ENCODE measurements at regions of chr17 and their contacts with region 1.

Region 1: GRCh38 chr17:34199932-34200534 is 55.1 kb upstream of the CCL2 start:
- DNase-seq: peak; percentile 54
- ATAC-seq: peak; percentile 93

Region 2: DNA sequence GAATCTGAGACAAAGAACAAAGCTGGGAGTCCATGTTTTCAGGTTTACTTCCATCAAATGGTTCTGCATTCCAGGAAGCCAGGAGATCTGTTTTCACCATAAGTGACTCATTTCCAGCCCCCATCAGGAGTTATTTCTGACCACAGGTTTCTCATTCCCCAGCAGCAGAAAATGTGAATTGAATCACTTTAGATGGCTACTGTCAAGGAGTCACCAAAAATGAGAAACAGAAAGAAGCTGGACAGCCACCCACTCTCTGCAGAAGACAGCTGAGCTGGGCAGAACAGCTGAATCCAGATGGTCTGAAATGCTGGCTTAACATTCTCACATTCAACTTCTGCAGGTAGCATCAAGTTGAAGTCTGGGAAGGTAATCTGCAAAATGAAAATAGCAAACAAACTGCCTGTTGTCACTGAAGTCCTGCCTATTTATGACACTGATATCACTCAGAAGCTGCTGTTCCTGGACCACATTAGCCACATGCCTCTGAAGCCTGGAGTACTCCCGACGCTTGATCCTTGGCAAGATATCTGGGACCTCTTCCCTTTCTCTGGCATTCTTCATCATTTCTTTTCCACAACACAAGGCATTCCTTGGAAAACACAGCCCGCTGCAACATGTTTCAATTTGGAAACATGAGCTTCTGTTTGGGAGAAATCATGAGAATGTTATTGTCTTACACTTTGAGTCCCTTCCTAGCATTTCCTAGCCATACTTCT is 100.8 kb after region 1 on chr17:
- intact Hi-C with region 1: loop called (anchors 2 kb)
- DNase-seq: no peak
- ATAC-seq: peak; percentile 45

Region 3: GRCh38 chr17:34311291-34311690 is 111.3 kb after region 1 on chr17:
- intact Hi-C with region 1: no loop called
- DNase-seq: no peak
- ATAC-seq: no peak

Region 4: DNA sequence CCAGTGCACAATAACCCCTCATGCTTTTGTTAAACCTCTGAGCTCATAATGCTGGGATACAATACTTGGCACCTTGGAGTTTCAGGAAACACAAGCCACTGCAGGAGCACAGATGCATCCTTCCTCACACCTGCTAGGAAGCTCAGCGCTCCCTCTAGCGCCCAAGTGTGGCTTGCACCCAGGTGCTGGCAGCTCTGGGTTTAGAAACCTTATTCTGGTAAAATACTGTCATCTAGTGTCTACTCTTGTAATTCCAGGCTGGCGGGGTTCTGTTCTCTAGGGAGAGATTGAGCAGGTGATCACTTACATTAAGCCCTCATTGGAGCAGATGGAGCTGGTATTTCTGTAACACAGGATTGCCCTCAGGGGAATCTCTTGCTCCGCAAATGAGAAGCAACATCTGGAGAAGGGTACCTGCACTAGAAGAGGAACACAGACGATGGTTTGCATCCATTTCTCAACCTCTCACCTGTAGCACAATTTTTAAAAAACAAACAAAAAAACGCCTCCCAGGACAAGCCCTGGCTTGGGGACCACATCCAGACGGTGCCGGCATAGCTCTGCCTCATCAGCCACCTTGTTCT is 161.5 kb after region 1 on chr17:
- intact Hi-C with region 1: loop called (anchors 2 kb)
- DNase-seq: peak; percentile 95
- ATAC-seq: peak; percentile 95